ENCODE measurements at regions of chr12 and their contacts with region 1.

Region 1: DNA sequence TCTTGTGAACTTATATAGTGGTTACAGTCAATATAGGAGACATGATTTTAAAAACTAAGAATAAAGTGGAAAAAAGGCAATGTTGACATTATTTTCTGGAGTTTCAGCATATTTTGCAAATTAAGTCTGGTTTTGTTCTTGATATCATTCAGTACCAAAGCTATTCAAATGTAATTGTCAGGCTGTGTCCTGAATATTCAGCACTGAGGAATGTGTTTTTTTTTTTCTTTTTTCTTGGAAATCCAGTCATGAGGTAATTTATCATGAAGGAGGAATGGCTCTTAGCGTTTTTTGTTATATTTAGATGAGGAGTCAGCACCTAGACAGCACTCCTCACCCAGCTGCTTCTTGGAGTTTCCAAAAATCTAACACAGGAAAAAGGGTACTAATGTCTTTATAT is 225.5 kb downstream of the CCDC91 start:
- DNase-seq: no peak
- ATAC-seq: no peak
- H3K4me3 ChIP-seq: no peak overlapping the region
- H3K4me3 Mint-ChIP-seq: no peak overlapping the region
- H3K27ac ChIP-seq: no peak overlapping the region
- H3K27ac Mint-ChIP-seq: no peak overlapping the region
- H3K4me1 ChIP-seq: no peaks in the 10 kb centered on the region
- H3K4me1 Mint-ChIP-seq: no peaks in the 10 kb centered on the region
- H3K27me3 ChIP-seq: no peaks in the 10 kb centered on the region
- H3K27me3 Mint-ChIP-seq: no peaks in the 10 kb centered on the region

Region 2: DNA sequence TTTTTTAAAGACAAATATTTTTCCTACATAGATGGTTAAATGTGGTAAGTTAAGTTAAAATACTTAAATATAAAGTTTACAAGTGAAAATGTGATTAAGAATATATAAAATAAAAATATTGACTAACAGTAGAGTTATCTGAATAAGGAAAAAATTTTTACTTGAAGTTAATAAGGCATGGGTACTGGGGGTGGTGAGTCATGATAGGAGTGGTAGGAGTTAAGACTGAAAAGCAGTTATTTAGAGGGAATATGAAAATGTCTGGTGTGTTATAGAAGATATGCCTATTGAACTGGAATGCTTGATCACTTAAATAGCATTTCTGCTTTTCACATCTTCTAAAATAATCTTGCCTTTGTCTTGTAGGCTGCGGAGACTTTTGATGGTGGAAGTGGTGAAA is 156.8 kb before region 1 on chr12:
- CTCF ChIA-PET with region 1: no interaction called
- POLR2A ChIA-PET with region 1: no interaction called
- intact Hi-C with region 1: no loop called
- DNase-seq: no peak
- ATAC-seq: no peak
- H3K4me3 ChIP-seq: no peak overlapping the region
- H3K4me3 Mint-ChIP-seq: no peak overlapping the region
- H3K27ac ChIP-seq: no peak overlapping the region
- H3K27ac Mint-ChIP-seq: no peak overlapping the region
- H3K4me1 ChIP-seq: no peaks in the 10 kb centered on the region
- H3K4me1 Mint-ChIP-seq: peaks cover 0 to 15% (median 3%) of the 10 kb centered on the region in 7 donors
- H3K27me3 ChIP-seq: no peaks in the 10 kb centered on the region
- H3K27me3 Mint-ChIP-seq: no peaks in the 10 kb centered on the region

Region 3: GRCh38 chr12:28446031-28446430 is 30.3 kb after region 1 on chr12:
- CTCF ChIA-PET with region 1: no interaction called
- POLR2A ChIA-PET with region 1: no interaction called
- intact Hi-C with region 1: loop called in 1 of 2 experiments (anchors 1 kb)
- DNase-seq: no peak
- ATAC-seq: no peak
- H3K4me3 ChIP-seq: no peak overlapping the region
- H3K4me3 Mint-ChIP-seq: no peak overlapping the region
- H3K27ac ChIP-seq: no peak overlapping the region
- H3K27ac Mint-ChIP-seq: no peak overlapping the region
- H3K4me1 ChIP-seq: no peaks in the 10 kb centered on the region
- H3K4me1 Mint-ChIP-seq: peaks cover 0 to 4% (median 0%) of the 10 kb centered on the region in 7 donors
- H3K27me3 ChIP-seq: no peaks in the 10 kb centered on the region
- H3K27me3 Mint-ChIP-seq: no peaks in the 10 kb centered on the region

Region 4: GRCh38 chr12:28611115-28611435 is 195.3 kb after region 1 on chr12:
- CTCF ChIA-PET with region 1: no interaction called
- POLR2A ChIA-PET with region 1: no interaction called
- intact Hi-C with region 1: no loop called
- DNase-seq: no peak
- ATAC-seq: no peak
- H3K4me3 ChIP-seq: no peak overlapping the region
- H3K4me3 Mint-ChIP-seq: no peak overlapping the region
- H3K27ac ChIP-seq: no peak overlapping the region
- H3K27ac Mint-ChIP-seq: no peak overlapping the region
- H3K4me1 ChIP-seq: no peaks in the 10 kb centered on the region
- H3K4me1 Mint-ChIP-seq: peaks cover 0 to 1% (median 0%) of the 10 kb centered on the region in 7 donors
- H3K27me3 ChIP-seq: no peaks in the 10 kb centered on the region
- H3K27me3 Mint-ChIP-seq: peaks cover 4 to 28% (median 21%) of the 10 kb centered on the region in 5 donors